ENCODE measurements at regions of chr19 and their contacts with region 1.

Region 1: DNA sequence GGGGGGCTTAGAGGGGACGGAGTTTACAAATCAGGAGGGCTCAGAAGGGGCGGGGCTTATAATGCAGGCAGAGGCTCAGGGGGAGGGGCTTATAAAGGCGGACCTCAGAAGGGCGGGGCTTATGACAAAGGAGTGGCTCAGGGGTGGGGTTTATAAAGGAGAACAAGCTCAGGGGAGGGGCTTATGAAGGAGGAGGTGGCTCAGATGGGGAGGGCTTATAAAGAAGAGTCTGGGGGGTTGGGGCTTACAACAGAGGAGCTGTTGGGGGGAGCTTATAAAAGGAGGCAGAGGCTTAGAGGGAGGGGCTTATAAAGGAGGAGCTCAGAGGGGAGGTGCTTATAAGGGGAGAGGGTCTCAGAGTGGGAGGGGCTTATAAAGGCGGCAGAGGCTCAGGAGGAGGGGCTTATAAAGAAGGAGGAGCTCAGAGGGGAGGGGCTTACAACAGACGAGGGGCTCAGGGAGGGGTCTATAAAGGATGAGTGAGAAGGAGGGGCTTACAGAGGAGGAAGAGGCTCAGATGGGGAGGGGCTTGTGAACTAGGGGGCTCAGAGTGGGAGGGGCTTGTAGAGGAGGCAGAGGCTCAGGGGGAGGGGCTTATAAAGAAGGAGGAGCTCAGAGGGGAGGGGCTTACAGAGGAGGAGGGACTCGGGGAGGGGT is 1.0 kb downstream of the SMIM24 start:
- DNase-seq: peak; percentile 86
- H3K4me3 Mint-ChIP-seq: peak overlapping the region; percentile 68
- H3K27ac Mint-ChIP-seq: no peak overlapping the region
- H3K4me1 Mint-ChIP-seq: peaks cover 16% of the 10 kb centered on the region
- H3K27me3 Mint-ChIP-seq: peaks cover 2% of the 10 kb centered on the region

Region 2: DNA sequence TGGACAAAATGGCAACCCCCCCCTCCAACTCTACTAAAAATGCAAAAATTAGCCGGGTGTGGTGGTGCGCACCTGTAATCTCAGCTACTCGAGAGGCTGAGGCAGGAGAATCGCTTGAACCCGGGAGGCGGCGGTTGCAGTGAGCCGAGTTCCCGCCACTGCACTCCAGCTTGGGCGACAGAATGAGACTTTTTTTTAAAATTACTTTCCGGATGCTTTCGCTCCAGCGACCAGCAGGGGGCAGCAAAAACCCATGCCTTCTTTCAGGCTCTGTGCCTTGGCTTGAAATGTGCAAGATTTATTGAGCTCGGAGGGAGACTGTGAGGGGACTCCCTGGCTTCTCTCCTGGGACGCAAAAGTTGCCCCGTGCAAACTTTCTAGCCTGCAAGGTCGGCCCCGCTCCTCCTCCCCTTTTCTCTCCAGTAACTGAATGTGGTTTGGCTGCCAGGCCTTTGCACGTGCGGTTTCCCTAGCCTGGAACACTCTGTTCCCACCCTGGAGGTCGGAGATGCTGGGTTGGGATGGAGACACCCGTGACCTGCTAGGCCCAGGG is 174.4 kb before region 1 on chr19:
- intact Hi-C with region 1: loop called (anchors 5 kb)
- DNase-seq: peak; percentile 92
- H3K4me3 Mint-ChIP-seq: no peak overlapping the region
- H3K27ac Mint-ChIP-seq: no peak overlapping the region
- H3K4me1 Mint-ChIP-seq: no peaks in the 10 kb centered on the region
- H3K27me3 Mint-ChIP-seq: peaks cover 2% of the 10 kb centered on the region

Region 3: DNA sequence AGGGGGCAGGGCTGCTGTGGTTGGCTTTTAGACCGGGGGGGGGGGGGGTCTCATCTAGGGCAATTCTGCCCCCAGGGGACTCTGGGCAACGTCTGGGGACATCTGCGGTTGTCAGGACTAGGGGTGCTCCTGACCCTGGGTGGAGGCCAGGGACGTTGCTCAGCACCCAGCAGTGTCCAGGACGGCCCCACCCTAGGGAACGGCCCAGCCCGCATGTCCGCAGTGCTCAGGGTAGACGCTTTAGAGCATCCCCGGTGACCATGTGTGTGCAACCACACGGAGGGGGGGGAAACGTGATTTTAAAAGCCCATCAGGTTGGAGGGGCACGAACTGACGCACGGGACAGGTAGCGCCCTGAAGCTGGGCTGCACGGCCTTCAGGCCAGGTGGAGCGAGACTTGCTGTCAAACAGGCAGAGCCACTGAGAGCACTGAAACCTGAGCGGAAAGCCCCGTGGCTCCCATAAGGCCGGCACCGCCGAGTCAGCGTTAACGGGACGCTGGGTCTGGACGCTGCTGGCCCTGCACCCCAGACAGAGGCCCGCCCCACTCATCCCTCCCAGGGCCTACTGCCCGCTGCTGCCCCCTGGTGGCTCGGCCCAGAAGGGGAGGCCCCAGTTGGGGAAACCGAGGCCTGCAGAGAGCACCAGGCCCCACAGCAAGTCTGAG is 139.0 kb after region 1 on chr19:
- intact Hi-C with region 1: no loop called
- DNase-seq: peak; percentile 87
- H3K4me3 Mint-ChIP-seq: no peak overlapping the region
- H3K27ac Mint-ChIP-seq: no peak overlapping the region
- H3K4me1 Mint-ChIP-seq: peaks cover 5% of the 10 kb centered on the region
- H3K27me3 Mint-ChIP-seq: no peaks in the 10 kb centered on the region

Measured in activated CD4-positive, alpha-beta T cell treated with anti-CD3 and anti-CD28 coated beads, Interleukin-2, amount 10 ng/mL, durations not matched to agents 24 days and 14 days (primary cell).